K562 (cell line): ENCODE measurements at regions of chr18 and their contacts with region 1.

Region 1: GRCh38 chr18:26335571-26336487 is 109.6 kb downstream of the TAF4B start:
- DNase-seq: no peak
- ATAC-seq: no peak
- H3K4me3 ChIP-seq: no peak overlapping the region
- H3K27ac ChIP-seq: no peak overlapping the region
- H3K4me1 ChIP-seq: no peaks in the 10 kb centered on the region
- H3K27me3 ChIP-seq: no peaks in the 10 kb centered on the region
- CTCF ChIP-seq: no peak
- EP300 ChIP-seq: no peak
- POLR2A ChIP-seq: no peak
- RAD21 ChIP-seq: no peak

Region 2: DNA sequence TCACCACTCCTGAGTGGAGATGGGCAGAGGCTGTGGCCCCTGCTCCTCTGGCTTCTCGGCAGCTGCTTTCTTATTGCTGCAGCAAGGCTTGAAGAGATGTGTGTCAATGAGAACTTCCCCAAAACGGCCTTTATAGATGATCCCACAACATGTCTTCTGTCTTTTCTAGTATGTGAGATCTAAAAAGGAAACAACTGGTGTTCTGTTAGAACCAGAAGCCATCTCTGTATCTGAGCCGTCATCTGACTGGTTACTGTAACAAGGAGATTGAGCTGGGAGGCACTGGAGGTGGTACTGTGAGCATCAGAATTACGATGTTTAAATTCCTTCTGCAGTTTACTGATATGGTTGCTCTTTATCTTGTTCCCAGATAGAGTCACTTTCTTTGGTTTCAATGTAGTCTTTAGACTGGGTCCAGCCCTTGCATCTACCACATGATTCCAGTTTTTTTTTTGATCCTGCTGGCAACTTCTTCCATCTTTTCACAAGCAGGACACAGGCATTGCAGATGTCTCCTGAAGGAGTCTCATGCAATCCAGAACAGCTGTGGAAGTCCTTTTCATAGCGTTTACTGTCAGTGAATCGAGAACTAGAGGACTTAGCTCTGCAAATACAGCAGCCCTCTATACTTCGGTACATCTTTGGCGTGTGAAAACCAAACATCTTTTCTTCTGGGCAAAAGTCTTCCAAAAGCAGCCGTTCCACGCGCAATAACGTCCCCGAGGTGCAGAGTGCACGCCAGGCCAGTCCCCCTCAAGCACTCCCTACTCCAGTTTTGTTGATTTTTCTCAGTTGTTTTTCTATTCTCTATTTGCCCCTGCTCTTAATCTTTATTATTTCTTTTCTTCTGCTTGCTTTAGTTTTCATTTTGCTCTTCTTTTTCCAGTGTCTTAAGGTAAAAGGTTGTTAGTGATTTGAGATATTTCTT is 79.9 kb before region 1 on chr18:
- CTCF ChIA-PET with region 1: no interaction called
- POLR2A ChIA-PET with region 1: no interaction called
- in situ Hi-C with region 1: no loop called
- intact Hi-C with region 1: no loop called
- DNase-seq: peak in 2 of 4 experiments; percentile 47 to 73
- ATAC-seq: peak; percentile 89
- H3K4me3 ChIP-seq: no peak overlapping the region
- H3K27ac ChIP-seq: peak overlapping the region; percentile 3; the same call in 1 of the 3 replicates
- H3K4me1 ChIP-seq: peaks cover 0 to 5% of the 10 kb centered on the region in 2 experiments; a peak in 1 of 5 replicates
- H3K27me3 ChIP-seq: no peaks in the 10 kb centered on the region
- CTCF ChIP-seq: no peak
- EP300 ChIP-seq: peak; percentile 27; the same call in 1 of the 2 replicates
- POLR2A ChIP-seq: no peak
- RAD21 ChIP-seq: no peak

Region 3: DNA sequence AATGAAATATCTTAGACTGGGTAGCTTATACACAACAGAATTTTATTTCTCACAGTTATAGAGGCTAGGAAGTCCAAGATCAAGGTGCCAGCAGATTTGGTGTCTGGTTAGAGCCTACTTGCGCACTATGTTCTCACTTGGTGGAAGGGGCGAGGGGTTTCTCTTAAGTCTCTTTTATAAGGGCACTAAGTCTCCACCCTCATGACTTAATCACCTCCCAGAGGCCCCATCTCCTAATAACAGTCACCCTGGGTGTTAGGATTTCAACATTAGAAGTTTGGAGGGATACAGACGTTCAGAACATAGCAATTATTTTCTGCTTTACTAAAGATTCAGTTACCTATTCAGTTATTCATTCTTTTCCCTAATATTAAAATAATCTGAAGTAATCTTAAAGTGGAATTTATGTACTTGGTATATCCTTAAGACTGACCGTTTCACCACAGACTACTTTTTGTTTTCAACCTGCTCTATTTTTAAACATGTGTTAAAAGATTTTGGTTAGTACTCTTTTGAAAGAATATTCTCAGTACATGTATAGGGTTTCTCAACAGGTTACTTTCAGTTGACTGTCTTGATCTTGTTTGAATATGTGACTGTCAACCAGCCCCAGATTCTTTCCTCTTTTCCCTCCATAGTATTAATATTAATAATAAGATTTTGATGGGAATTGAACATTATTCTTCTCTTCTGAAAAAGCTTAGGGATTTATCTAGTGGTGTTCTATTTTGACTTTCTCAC is 20.4 kb after region 1 on chr18:
- CTCF ChIA-PET with region 1: interaction called, 3 read pairs
- POLR2A ChIA-PET with region 1: interaction called, 3 read pairs
- in situ Hi-C with region 1: no loop called
- intact Hi-C with region 1: loop called (anchors 2 kb)
- DNase-seq: no peak
- ATAC-seq: peak; percentile 31; the same call in 1 of the 3 replicates
- H3K4me3 ChIP-seq: no peak overlapping the region
- H3K27ac ChIP-seq: no peak overlapping the region
- H3K4me1 ChIP-seq: no peaks in the 10 kb centered on the region
- H3K27me3 ChIP-seq: no peaks in the 10 kb centered on the region
- CTCF ChIP-seq: no peak
- EP300 ChIP-seq: no peak
- POLR2A ChIP-seq: no peak
- RAD21 ChIP-seq: no peak